Caco-2 (cell line): ENCODE measurements at regions of chrX and their contacts with region 1.

Region 1: GRCh38 chrX:57821703-57822375 is 88.4 kb downstream of the ZXDA start:
- DNase-seq: peak; percentile 32 to 49
- H3K4me3 ChIP-seq: no peak overlapping the region
- H3K4me3 Mint-ChIP-seq: no peak overlapping the region
- H3K27ac Mint-ChIP-seq: no peak overlapping the region
- H3K4me1 ChIP-seq: no peaks in the 10 kb centered on the region
- H3K4me1 Mint-ChIP-seq: no peaks in the 10 kb centered on the region
- H3K27me3 ChIP-seq: no peaks in the 10 kb centered on the region
- H3K27me3 Mint-ChIP-seq: no peaks in the 10 kb centered on the region
- CTCF ChIP-seq: peak; percentile 46 to 51

Region 2: GRCh38 chrX:57573754-57574153 is 248.1 kb before region 1 on chrX:
- CTCF ChIA-PET with region 1: no interaction called
- POLR2A ChIA-PET with region 1: no interaction called
- intact Hi-C with region 1: loop called (anchors 10 kb)
- DNase-seq: peak in 1 of 2 experiments; percentile 13
- H3K4me3 ChIP-seq: no peak overlapping the region
- H3K4me3 Mint-ChIP-seq: no peak overlapping the region
- H3K27ac Mint-ChIP-seq: no peak overlapping the region
- H3K4me1 ChIP-seq: no peaks in the 10 kb centered on the region
- H3K4me1 Mint-ChIP-seq: no peaks in the 10 kb centered on the region
- H3K27me3 ChIP-seq: no peaks in the 10 kb centered on the region
- H3K27me3 Mint-ChIP-seq: peaks cover 5% of the 10 kb centered on the region
- CTCF ChIP-seq: peak; percentile 22 to 44

Region 3: GRCh38 chrX:57900975-57901374 is 79.1 kb after region 1 on chrX:
- CTCF ChIA-PET with region 1: no interaction called
- POLR2A ChIA-PET with region 1: no interaction called
- intact Hi-C with region 1: no loop called
- DNase-seq: no peak
- H3K4me3 ChIP-seq: no peak overlapping the region
- H3K4me3 Mint-ChIP-seq: no peak overlapping the region
- H3K27ac Mint-ChIP-seq: no peak overlapping the region
- H3K4me1 ChIP-seq: no peaks in the 10 kb centered on the region
- H3K4me1 Mint-ChIP-seq: no peaks in the 10 kb centered on the region
- H3K27me3 ChIP-seq: no peaks in the 10 kb centered on the region
- H3K27me3 Mint-ChIP-seq: no peaks in the 10 kb centered on the region
- CTCF ChIP-seq: no peak

Region 4: DNA sequence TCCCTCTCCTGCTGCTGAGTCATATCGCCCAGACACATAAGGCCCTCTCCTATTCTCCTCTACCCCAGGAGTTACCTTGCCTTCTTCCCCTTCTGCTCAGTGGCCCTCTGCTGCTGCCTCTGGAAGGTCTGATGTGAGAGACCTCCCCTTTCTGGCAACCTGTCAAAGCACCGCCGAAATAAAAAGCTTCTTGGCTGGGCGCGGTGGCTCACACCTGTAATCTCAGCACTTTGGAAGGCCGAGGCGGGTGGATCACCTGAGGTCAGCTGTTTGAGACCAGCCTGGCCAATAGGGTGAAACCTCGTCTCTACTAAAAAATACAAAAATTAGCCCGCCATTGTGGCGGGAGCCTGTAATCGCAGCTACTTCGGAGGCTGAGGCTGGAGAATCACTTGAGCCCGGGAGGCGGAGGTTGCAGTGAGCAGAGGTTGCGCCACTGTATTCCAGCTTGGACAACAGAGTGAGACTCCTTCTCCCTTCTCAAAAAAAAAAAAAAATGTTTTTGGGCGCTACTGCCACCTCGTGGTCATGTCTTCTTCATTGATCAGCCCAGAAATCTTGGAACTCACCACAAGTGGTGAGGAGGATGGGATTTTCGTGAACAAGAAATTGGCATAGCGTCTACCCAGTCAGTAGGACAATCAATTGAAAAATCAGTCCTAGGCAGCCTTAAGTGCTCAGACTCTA is 97.1 kb after region 1 on chrX:
- CTCF ChIA-PET with region 1: interaction called, 3 read pairs
- POLR2A ChIA-PET with region 1: no interaction called
- intact Hi-C with region 1: loop called (anchors 1 kb)
- DNase-seq: peak in 1 of 2 experiments; percentile 48
- H3K4me3 ChIP-seq: no peak overlapping the region
- H3K4me3 Mint-ChIP-seq: no peak overlapping the region
- H3K27ac Mint-ChIP-seq: no peak overlapping the region
- H3K4me1 ChIP-seq: no peaks in the 10 kb centered on the region
- H3K4me1 Mint-ChIP-seq: no peaks in the 10 kb centered on the region
- H3K27me3 ChIP-seq: no peaks in the 10 kb centered on the region
- H3K27me3 Mint-ChIP-seq: no peaks in the 10 kb centered on the region
- CTCF ChIP-seq: peak in 1 of 2 experiments; percentile 51

Region 5: DNA sequence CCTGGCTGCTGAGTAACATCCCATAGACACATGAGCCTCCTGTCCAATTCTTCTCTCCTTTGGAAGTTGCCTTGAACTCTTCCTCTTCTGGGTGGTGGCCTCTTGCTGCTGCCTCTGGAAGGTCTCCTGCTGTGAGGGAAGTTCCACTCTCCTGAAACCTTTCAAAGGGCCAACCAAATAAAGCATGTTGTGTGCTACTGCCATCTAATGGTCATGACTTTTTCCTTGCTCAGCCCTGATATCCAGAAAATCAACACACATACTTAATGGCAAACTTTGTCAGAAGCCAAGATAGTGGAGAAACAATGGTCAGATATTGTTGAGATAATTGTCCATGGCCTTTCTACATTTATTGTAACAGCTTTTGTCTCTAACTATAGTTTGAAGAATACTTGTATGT is 107.5 kb after region 1 on chrX:
- CTCF ChIA-PET with region 1: interaction called, 3 read pairs
- POLR2A ChIA-PET with region 1: no interaction called
- intact Hi-C with region 1: loop called (anchors 1 kb)
- DNase-seq: peak in 1 of 2 experiments; percentile 7
- H3K4me3 ChIP-seq: no peak overlapping the region
- H3K4me3 Mint-ChIP-seq: no peak overlapping the region
- H3K27ac Mint-ChIP-seq: no peak overlapping the region
- H3K4me1 ChIP-seq: no peaks in the 10 kb centered on the region
- H3K4me1 Mint-ChIP-seq: no peaks in the 10 kb centered on the region
- H3K27me3 ChIP-seq: no peaks in the 10 kb centered on the region
- H3K27me3 Mint-ChIP-seq: no peaks in the 10 kb centered on the region
- CTCF ChIP-seq: peak; percentile 19 to 28

Region 6: DNA sequence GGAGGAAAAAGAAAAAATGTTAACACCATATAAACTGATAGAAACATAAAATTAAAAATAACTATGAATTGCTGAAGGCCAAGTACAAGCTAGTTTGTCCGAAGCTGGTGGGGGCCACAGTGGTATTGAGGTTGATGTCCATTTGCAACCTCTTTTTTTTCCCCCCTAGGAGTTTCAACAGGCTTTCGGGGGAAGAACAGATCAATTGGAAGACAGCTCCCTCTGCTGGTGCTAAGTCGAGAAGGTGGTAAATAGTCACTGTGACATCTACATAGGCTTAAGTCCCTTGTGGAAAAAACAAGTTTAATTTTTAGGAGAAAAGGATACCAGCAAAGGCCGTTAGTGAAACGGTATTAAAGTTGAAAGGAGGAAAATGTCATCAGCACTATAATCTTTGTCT is 204.1 kb after region 1 on chrX:
- CTCF ChIA-PET with region 1: no interaction called
- POLR2A ChIA-PET with region 1: no interaction called
- intact Hi-C with region 1: loop called (anchors 1 kb)
- DNase-seq: peak in 1 of 2 experiments; percentile 14
- H3K4me3 ChIP-seq: no peak overlapping the region
- H3K4me3 Mint-ChIP-seq: no peak overlapping the region
- H3K27ac Mint-ChIP-seq: no peak overlapping the region
- H3K4me1 ChIP-seq: no peaks in the 10 kb centered on the region
- H3K4me1 Mint-ChIP-seq: no peaks in the 10 kb centered on the region
- H3K27me3 ChIP-seq: no peaks in the 10 kb centered on the region
- H3K27me3 Mint-ChIP-seq: no peaks in the 10 kb centered on the region
- CTCF ChIP-seq: peak; percentile 39 to 48